ENCODE measurements at regions of chr4 and their contacts with region 1.

Region 1: DNA sequence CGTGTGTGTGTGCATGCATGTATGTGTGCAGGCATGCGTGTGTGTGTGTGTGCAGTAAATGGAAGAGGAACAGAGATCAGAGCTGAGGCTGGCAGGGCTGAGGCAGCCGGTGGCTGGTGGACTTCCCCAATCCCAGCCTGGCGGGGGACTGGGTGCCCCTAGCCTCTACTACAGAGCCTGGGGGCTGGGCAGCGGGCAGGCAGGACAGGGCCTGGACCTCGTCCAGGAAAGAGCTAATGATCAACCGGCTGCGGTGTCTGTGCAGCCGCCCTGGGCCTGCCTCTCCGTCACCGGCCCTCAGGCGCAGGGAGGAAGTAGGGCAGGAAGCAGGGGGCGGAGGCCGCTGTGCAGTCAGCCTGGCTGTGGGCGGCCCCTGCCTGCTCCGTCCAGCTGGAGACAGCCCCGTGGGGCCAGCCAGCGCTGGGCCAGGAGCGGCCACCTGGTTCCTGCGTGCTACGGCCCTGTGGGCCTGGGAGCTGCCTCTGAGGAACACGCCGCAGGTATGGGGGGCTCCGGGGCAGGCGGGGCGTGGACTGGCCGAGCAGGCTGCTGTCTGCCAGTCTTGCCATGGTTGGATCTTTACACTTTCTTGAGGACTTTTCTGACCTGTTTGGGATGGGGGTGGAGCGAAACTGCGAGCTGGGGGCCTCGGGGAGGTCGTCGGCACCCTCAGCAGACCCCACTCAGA is at the start of gene SH3TC1:
- DNase-seq: peak; percentile 34 to 81 (median 56)
- ATAC-seq: peak; percentile 55
- H3K4me3 ChIP-seq: peak within 1 kb of the TSS; percentile 70
- H3K4me3 Mint-ChIP-seq: peak within 1 kb of the TSS; percentile 99
- H3K27ac ChIP-seq: peak within 1 kb of the TSS; percentile 68 to 79
- H3K27ac Mint-ChIP-seq: peak within 1 kb of the TSS; percentile 99
- H3K4me1 ChIP-seq: peaks cover 53% of the 10 kb centered on the region
- H3K4me1 Mint-ChIP-seq: peaks cover 37% of the 10 kb centered on the region
- H3K27me3 ChIP-seq: no peaks in the 10 kb centered on the region
- H3K27me3 Mint-ChIP-seq: no peaks in the 10 kb centered on the region
- CTCF ChIP-seq: no peak
- total RNA-seq, gene SH3TC1: 119 to 127 TPM

Region 2: DNA sequence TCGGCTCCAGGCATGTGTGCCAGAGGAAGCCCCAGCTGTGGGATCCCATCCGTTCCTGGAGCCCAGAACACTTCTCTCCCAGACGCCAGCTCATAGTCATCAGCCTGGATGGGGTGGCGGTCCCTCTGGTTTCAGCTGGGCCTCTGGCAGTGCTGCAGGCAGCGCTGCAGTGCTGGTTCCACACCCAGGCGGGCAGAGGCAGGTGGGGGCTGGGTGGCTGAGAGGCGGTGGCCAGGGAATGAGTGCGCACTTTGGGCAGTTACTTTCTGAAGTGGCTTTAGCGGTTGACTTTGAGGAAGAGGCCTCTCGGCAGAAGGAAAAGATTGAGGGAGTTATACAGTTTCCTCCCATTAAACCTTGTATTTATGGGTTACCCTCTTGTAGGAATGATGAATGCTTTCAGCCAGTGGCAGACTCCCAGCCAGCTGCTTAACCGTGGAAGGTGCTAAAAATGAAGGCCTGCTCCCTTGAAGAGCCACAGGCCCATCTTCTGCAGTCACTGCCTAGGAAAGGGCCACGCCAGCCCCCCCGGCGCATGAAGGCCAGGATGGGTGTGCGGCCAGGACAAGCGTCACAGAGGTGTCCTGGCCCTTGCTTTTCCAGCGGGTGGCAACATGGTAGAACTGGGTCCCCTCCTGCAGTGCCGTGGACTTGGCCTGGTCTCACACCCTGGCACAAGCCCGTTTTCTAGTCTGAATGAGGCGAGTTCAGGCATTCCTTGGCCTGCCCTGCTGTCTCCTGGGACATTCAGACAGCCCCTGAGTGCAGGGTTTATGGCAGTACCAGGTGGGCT is 1145.9 kb before region 1 on chr4:
- CTCF ChIA-PET with region 1: no interaction called
- POLR2A ChIA-PET with region 1: no interaction called
- intact Hi-C with region 1: no loop called
- DNase-seq: peak in 3 of 14 experiments; percentile 16 to 44 (median 35)
- ATAC-seq: peak; percentile 54
- H3K4me3 ChIP-seq: no peak overlapping the region
- H3K4me3 Mint-ChIP-seq: no peak overlapping the region
- H3K27ac ChIP-seq: peak overlapping the region; percentile 29
- H3K27ac Mint-ChIP-seq: peak overlapping the region; percentile 77
- H3K4me1 ChIP-seq: peaks cover 49% of the 10 kb centered on the region
- H3K4me1 Mint-ChIP-seq: peaks cover 34% of the 10 kb centered on the region
- H3K27me3 ChIP-seq: no peaks in the 10 kb centered on the region
- H3K27me3 Mint-ChIP-seq: no peaks in the 10 kb centered on the region
- CTCF ChIP-seq: no peak

Region 3: GRCh38 chr4:8000721-8001491 is 198.1 kb before region 1 on chr4:
- CTCF ChIA-PET with region 1: no interaction called
- POLR2A ChIA-PET with region 1: no interaction called
- intact Hi-C with region 1: no loop called
- DNase-seq: no peak
- ATAC-seq: no peak
- H3K4me3 ChIP-seq: no peak overlapping the region
- H3K4me3 Mint-ChIP-seq: no peak overlapping the region
- H3K27ac ChIP-seq: no peak overlapping the region
- H3K27ac Mint-ChIP-seq: no peak overlapping the region
- H3K4me1 ChIP-seq: no peaks in the 10 kb centered on the region
- H3K4me1 Mint-ChIP-seq: no peaks in the 10 kb centered on the region
- H3K27me3 ChIP-seq: peaks cover 0 to 2% of the 10 kb centered on the region in 2 experiments
- H3K27me3 Mint-ChIP-seq: no peaks in the 10 kb centered on the region
- CTCF ChIP-seq: no peak

Region 4: DNA sequence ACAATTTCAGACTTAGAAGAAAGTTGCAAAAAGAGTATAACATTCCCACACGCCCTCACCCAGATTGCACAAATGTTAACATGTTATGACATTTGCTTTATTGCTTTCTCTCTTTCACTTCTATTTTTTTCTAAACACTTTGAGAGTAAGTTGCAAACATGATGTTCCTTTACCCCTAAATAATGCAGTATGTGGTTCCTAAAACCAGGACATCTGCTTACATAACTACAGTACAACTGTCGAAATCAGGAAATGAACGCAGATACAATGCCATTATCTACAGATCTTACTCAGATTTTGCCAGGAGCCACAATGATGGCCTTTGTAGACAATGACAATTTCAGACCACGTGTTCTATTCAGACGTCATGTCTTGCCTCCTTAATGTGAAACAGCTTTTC is 22.4 kb after region 1 on chr4:
- CTCF ChIA-PET with region 1: no interaction called
- POLR2A ChIA-PET with region 1: interaction called, 4 read pairs
- intact Hi-C with region 1: loop called in 1 of 2 experiments (anchors 1 kb)
- DNase-seq: peak in 3 of 14 experiments; percentile 65 to 83 (median 76)
- ATAC-seq: peak; percentile 79
- H3K4me3 ChIP-seq: no peak overlapping the region
- H3K4me3 Mint-ChIP-seq: peak overlapping the region; percentile 2
- H3K27ac ChIP-seq: peak overlapping the region; percentile 6 to 49
- H3K27ac Mint-ChIP-seq: peak overlapping the region; percentile 79
- H3K4me1 ChIP-seq: peaks cover 48% of the 10 kb centered on the region
- H3K4me1 Mint-ChIP-seq: peaks cover 40% of the 10 kb centered on the region
- H3K27me3 ChIP-seq: no peaks in the 10 kb centered on the region
- H3K27me3 Mint-ChIP-seq: no peaks in the 10 kb centered on the region
- CTCF ChIP-seq: no peak

Region 5: GRCh38 chr4:8228319-8229250 is 29.5 kb after region 1 on chr4:
- CTCF ChIA-PET with region 1: interaction called, 3 read pairs
- POLR2A ChIA-PET with region 1: interaction called, 16 read pairs
- intact Hi-C with region 1: no loop called
- DNase-seq: peak; percentile 43 to 87 (median 62)
- ATAC-seq: peak; percentile 84
- H3K4me3 ChIP-seq: peak overlapping the region; percentile 28
- H3K4me3 Mint-ChIP-seq: peak overlapping the region; percentile 66
- H3K27ac ChIP-seq: peak overlapping the region; percentile 34 to 54
- H3K27ac Mint-ChIP-seq: peak overlapping the region; percentile 76
- H3K4me1 ChIP-seq: peaks cover 55% of the 10 kb centered on the region
- H3K4me1 Mint-ChIP-seq: peaks cover 34% of the 10 kb centered on the region
- H3K27me3 ChIP-seq: no peaks in the 10 kb centered on the region
- H3K27me3 Mint-ChIP-seq: no peaks in the 10 kb centered on the region
- CTCF ChIP-seq: no peak

Region 6: DNA sequence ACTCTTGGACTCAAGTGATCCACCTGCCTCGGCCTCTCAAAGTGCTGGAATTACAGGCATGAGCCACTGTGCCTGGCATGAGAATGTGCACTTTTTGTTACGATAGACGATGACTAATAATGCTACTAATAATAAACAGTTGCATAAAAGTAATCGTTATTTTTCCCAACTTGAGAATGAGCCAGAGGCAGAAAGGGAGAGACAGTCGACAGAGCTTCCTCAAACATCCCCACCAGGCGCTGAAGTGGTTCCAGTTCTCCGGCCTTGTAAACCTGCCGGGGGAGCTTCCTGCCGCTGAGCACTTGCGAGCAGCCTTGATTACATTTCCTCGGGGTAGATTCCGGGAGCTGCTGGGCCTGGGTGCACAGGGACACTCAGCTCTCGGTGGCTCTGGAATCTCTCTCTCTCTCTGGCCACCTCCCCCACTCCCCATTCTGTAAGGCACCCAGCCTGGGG is 61.6 kb after region 1 on chr4:
- CTCF ChIA-PET with region 1: no interaction called
- POLR2A ChIA-PET with region 1: no interaction called
- intact Hi-C with region 1: no loop called
- DNase-seq: no peak
- ATAC-seq: no peak
- H3K4me3 ChIP-seq: no peak overlapping the region
- H3K4me3 Mint-ChIP-seq: no peak overlapping the region
- H3K27ac ChIP-seq: no peak overlapping the region
- H3K27ac Mint-ChIP-seq: no peak overlapping the region
- H3K4me1 ChIP-seq: no peaks in the 10 kb centered on the region
- H3K4me1 Mint-ChIP-seq: no peaks in the 10 kb centered on the region
- H3K27me3 ChIP-seq: peaks cover 0 to 2% of the 10 kb centered on the region in 2 experiments
- H3K27me3 Mint-ChIP-seq: no peaks in the 10 kb centered on the region
- CTCF ChIP-seq: no peak